GM13976 (cell line): ENCODE measurements at regions of chr10 and their contacts with region 1.

Region 1: GRCh38 chr10:97207756-97208346 is 22.1 kb upstream of the SLIT1 start:
- DNase-seq: no peak
- CTCF ChIP-seq: no peak

Region 2: GRCh38 chr10:96910488-96911395 is 297.1 kb before region 1 on chr10:
- in situ Hi-C with region 1: no loop called
- DNase-seq: peak; percentile 67
- CTCF ChIP-seq: peak; percentile 28

Region 3: DNA sequence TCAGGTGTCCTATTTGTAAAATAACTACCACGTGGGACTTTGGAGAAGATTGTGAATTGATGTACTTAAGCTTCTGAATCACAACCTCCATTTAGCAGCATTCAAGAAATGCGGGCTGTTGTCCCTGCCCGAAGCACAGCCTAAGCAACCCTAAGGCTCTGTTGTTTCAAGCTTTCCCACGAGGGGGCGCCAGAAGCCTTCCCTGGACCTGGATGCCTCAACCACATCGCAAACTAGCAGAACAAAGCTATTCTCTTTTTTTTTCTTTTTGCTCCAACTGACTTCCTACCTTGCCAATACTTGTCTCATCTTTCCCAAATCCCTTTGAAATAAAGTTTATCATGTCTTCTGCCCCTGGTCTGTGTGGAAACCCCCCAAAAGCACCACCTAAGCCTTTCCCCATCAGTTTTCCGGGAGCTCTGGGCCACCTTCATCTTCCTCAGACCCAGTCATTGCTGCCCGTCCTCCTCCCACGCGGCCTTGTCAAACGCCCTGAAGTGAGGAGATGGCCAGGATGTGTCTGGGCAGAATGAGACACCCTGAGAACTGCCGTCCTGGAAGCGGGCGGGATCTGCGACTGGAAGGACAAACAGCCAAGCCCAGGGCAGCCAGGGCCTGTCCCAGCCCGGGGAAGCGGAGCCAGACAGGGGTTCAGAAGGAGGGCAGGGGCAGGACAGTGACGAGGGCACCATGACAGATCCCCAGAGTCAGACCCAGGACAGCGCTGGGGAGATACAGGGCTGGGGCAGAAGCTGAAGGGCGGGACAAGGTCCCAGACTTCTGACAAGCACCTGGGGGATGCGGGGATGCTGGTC is 134.8 kb before region 1 on chr10:
- in situ Hi-C with region 1: loop called (anchors 5 kb)
- DNase-seq: peak; percentile 86
- CTCF ChIP-seq: peak; percentile 84

Region 4: DNA sequence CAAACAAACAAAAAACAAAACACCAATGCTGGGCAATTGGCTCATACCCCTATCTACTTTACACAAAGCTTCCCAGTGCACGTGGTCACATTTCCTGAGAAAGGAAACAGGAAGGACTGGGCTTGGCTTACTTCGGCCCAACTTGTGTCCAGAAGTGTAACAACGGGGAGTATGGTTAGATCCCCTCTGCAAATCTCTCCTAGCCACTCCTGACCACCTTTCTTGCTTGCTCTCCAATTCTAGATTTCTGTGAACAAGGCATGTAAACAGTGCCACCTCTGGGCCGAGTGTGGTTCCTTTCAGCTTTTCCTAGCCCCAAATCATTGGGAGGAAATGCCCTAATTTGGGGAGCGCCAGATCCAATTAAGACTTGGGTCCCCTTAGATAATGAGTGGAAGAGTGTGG is 147.7 kb after region 1 on chr10:
- in situ Hi-C with region 1: no loop called
- DNase-seq: no peak
- CTCF ChIP-seq: no peak